Common myeloid progenitor, CD34-positive (primary cell): ENCODE measurements at regions of chr16 and their contacts with region 1.

Region 1: DNA sequence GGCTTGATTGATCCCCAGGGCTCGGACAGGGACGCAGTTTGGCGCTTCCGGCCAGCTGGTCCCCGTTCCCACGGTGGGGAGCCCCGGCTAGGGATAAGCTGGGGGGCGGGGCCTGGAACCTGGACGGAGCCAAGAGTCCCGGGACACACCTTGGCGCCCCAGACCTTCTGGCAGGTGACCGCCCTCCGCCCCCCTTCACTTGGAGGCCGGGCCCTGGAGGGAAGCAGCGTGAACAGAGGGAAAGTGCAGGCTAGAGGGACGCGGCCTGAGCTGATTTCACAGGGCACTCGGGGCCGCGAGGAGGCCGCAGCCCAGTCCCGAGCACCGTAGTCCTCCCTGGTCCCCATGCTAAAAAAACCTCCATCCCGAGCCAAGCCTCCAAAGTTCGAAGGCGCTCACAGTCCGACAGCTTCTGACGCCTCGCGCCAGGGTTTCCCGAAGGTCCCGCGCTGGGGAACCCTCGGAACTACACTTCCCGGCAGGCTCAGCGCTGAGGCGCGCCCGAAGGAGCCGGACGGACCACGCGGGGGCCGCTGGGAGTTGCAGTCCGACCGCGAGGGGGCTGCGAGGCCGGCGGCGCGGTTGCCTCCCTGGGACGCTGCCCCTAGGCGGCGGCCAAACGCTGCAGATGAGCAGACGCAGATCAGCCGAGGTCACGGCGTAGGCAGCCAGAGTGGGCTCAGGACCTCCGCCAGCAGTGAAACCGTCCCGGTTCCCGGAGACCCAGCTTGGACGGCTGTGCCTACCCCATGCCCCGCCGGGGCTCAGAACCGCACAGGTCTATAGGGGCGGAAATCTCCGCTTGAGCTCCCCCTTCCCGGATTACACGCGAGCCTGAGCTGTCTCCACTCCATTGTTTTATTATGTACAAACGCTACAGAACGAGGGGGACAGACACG is at the start of gene TBX6:
- DNase-seq: peak; percentile 92 to 95 (median 94)
- H3K4me3 ChIP-seq: peak within 1 kb of the TSS; percentile 53 to 86 (median 75)
- H3K27ac ChIP-seq: peak within 1 kb of the TSS in 1 of 2 experiments; percentile 87
- H3K4me1 ChIP-seq: peaks cover 0 to 58% (median 46%) of the 10 kb centered on the region in 4 experiments
- H3K27me3 ChIP-seq: no peaks in the 10 kb centered on the region

Region 2: GRCh38 chr16:30041846-30042267 is 49.9 kb before region 1 on chr16:
- CTCF ChIA-PET with region 1: interaction called, 20 read pairs
- POLR2A ChIA-PET with region 1: no interaction called
- DNase-seq: peak; percentile 57 to 75 (median 70)
- H3K4me3 ChIP-seq: no peak overlapping the region
- H3K27ac ChIP-seq: no peak overlapping the region
- H3K4me1 ChIP-seq: peaks cover 0 to 5% (median 3%) of the 10 kb centered on the region in 4 experiments
- H3K27me3 ChIP-seq: no peaks in the 10 kb centered on the region

Region 3: DNA sequence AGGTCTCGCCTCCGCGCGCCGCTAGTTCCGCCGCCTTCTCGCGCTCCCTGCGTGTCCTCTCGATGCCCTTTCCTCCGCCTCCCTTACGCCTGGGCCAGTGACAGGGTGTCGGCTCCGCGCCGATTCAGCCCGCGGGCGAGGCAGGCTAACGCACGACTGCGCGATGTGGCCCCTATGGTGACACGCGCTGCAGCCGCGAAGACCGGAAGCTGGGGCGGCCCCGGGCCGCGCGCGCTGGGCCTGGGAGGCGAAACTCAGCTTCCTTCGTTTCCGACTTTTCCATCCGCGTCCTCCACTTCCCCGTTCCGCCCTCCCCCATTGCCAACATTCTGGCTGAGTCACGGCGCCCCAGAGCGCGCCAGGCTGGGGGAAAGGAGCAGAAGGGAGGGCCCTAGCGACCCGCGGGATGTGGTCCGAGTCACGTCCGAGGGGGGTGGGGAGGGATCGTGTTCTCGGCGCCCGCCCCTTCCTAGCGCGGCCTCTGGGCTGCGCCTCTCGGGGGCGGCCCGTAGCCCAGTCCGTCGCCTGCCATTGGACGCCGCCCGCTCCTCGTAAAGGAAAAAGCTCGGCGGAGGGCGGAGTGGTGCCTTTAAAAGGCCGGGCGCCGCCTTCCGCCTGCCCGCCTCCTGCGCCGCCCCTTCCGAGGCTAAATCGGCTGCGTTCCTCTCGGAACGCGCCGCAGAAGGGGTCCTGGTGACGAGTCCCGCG is 26.4 kb before region 1 on chr16 and contains the start of gene ALDOA:
- CTCF ChIA-PET with region 1: interaction called, 235 read pairs
- POLR2A ChIA-PET with region 1: interaction called, 20 read pairs
- DNase-seq: peak; percentile 98 to 99 (median 99)
- H3K4me3 ChIP-seq: peak within 1 kb of the TSS; percentile 82 to 99 (median 93)
- H3K27ac ChIP-seq: peak within 1 kb of the TSS; percentile 82 to 91
- H3K4me1 ChIP-seq: peaks cover 0 to 38% (median 35%) of the 10 kb centered on the region in 4 experiments
- H3K27me3 ChIP-seq: no peaks in the 10 kb centered on the region

Region 4: GRCh38 chr16:30104494-30104968 is 12.8 kb after region 1 on chr16:
- CTCF ChIA-PET with region 1: interaction called, 54 read pairs
- POLR2A ChIA-PET with region 1: no interaction called
- DNase-seq: no peak
- H3K4me3 ChIP-seq: no peak overlapping the region
- H3K27ac ChIP-seq: no peak overlapping the region
- H3K4me1 ChIP-seq: no peaks in the 10 kb centered on the region
- H3K27me3 ChIP-seq: no peaks in the 10 kb centered on the region

Region 5: DNA sequence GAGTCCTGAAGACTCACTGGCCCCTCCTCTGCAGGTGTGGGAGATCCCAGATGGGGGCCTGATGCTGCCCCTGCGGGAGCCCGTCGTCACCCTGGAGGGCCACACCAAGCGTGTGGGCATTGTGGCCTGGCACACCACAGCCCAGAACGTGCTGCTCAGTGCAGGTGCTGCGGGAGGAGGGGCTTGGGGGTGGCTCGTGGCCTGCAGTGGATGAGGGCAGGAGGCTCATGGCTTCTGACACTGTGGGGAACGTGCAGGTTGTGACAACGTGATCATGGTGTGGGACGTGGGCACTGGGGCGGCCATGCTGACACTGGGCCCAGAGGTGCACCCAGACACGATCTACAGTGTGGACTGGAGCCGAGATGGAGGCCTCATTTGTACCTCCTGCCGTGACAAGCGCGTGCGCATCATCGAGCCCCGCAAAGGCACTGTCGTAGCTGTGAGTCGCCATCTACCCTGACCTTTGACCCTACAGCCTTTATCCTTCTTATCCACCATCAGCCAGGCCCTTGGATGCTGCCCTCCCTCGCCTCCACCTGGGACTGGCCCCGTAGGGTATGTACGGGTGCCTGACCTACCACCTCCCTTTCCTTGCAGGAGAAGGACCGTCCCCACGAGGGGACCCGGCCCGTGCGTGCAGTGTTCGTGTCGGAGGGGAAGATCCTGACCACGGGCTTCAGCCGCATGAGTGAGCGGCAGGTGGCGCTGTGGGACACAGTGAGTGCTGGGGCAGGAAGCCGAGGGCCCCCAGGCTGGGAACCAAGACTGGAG is 95.2 kb after region 1 on chr16:
- CTCF ChIA-PET with region 1: interaction called, 16 read pairs
- POLR2A ChIA-PET with region 1: interaction called, 4 read pairs
- DNase-seq: peak; percentile 70 to 83 (median 79)
- H3K4me3 ChIP-seq: peak overlapping the region in 4 of 7 experiments; percentile 19 to 85 (median 51)
- H3K27ac ChIP-seq: peak overlapping the region in 1 of 2 experiments; percentile 76
- H3K4me1 ChIP-seq: peaks cover 0 to 51% (median 43%) of the 10 kb centered on the region in 4 experiments
- H3K27me3 ChIP-seq: no peaks in the 10 kb centered on the region